HCT116 (cell line): ENCODE measurements at regions of chr2 and their contacts with region 1.

Region 1: DNA sequence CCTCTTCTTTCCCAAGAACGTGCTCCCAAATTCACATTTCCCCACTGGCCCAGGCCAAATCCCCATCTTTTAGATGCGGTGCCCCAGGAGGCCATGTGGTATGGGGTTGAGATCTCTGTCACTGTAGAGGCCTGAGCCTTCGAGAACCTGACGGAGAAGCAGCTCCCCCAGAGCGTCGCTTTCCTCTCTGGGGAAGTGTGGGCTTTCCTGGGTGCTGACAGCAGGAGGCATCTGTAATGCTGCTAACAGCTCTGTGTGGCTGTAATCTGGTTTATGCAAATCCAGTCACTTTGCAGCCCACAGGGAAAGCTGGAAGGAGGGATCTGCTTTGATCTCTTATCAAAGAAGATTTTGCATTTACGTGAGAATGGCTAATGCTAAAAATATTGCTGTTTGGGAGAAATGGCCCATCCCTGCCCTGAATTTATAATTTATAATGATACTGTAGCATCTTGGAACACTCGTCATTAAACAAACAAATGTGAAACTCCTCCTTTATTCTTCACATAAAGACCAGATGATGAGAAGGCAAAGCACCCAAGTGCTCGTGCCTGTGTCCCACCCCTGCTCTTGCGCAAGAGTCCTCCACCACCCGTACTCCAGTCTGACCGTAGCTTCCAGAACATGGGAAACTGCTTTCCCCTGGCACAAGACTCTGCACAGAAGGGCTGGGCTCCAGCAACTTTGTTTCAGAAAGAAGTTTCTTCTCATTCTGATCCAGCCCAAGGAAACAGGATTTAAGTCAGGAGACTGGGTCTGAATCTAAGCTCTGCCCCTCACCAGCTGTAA is 109.9 kb upstream of the EPC2 start:
- DNase-seq: no peak
- ATAC-seq: no peak
- H3K4me3 ChIP-seq: no peak overlapping the region
- H3K27ac ChIP-seq: no peak overlapping the region
- H3K4me1 ChIP-seq: no peaks in the 10 kb centered on the region
- H3K27me3 ChIP-seq: no peaks in the 10 kb centered on the region
- CTCF ChIP-seq: no peak
- POLR2A ChIP-seq: no peak
- RAD21 ChIP-seq: no peak

Region 2: DNA sequence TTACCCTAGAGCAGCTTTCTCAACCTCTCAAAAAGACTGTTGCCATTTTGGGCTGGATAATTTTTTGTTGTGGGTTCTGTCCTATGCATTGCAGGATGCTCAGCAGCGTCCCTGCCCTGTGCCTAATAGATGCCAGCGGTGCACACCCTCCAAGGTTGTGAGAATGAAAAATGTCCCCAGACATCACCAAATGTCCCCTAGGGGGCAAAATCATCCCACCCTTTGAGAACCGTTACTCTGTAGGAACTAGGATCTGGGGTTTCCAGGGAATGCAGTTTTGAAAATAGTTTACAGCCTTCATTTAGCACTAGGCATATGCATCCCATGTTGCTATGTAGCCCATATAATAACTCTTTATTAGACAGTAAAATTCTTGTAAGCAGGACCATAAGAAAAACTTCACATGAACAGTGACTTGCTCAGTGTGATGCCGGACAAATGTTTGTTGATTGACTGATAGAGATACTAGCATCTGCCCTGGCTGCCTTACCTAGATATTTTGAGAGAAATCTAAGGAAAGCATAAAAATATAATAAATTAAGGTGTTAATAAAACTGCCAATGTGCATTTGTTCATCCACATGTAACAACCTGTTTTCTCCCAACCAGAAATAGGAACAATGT is 30.8 kb after region 1 on chr2:
- CTCF ChIA-PET with region 1: no interaction called
- POLR2A ChIA-PET with region 1: no interaction called
- RAD21 ChIA-PET with region 1: no interaction called
- intact Hi-C with region 1: loop called (anchors 1 kb)
- DNase-seq: no peak
- ATAC-seq: peak; percentile 74
- H3K4me3 ChIP-seq: no peak overlapping the region
- H3K27ac ChIP-seq: no peak overlapping the region
- H3K4me1 ChIP-seq: no peaks in the 10 kb centered on the region
- H3K27me3 ChIP-seq: no peaks in the 10 kb centered on the region
- CTCF ChIP-seq: peak in 2 of 3 experiments; percentile 41 to 45; a peak in 5 of 6 replicates
- POLR2A ChIP-seq: no peak
- RAD21 ChIP-seq: peak; percentile 69